Activated CD8-positive, alpha-beta memory T cell treated with anti-CD3 and anti-CD28 coated beads, Interleukin-2, amount 10 ng/mL, durations not matched to agents 7 days and 5 days (primary cell): ENCODE measurements at regions of chr7 and their contacts with region 1.

Region 1: GRCh38 chr7:117127585-117128168 is 174.4 kb downstream of the ST7 start:
- DNase-seq: peak; percentile 60
- ATAC-seq: peak; percentile 58
- H3K4me3 Mint-ChIP-seq: no peak overlapping the region
- H3K27ac Mint-ChIP-seq: no peak overlapping the region
- H3K4me1 Mint-ChIP-seq: peaks cover 12% of the 10 kb centered on the region
- H3K27me3 Mint-ChIP-seq: no peaks in the 10 kb centered on the region

Region 2: DNA sequence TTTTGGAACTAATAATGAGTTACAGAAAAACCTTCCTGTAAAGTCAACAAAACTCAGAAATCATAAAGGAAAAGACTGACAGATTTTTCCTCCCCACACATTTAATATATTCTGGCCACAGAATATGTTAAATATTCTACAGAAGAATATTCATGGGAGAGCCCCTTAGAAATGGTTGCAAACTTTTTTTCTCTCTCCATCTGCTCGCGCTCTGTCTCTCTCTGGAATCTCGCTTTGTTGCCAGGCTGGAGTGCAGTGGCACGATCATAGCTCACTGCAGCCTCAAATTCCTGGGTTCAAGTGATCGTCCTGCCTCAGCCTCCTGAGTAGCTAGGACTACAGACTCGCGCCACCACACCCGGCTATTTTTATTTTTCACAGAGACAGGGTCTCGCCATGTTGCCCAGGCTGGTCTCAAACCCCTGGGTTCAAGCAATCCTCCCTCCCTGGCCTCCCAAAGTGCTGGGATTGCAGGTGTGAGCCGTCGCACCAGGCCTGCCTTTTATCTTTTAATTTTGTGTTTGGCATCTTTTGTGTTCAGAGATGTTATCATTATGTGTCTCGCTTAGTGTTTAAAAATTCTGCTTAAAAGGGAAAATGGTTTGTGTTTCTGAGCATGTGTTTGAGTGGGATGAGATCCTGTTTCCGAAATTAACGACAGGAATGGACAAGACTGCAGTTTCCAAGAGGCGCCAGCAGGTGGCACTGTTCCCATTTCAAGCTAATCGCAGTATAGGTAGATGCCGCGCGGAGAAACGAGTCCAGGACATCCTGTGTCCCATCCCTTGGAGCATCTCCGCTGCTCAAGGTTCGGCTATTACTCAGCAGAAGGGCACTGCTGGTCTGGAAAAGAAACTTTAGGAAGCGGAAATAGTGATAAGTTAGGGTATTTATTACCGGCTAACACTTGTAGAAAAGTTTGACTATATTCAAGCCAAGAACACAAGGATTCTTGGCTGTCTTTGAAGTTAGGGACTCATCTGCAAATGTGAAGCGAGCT is 197.5 kb before region 1 on chr7:
- CTCF ChIA-PET with region 1: interaction called, 33 read pairs
- DNase-seq: peak; percentile 84
- ATAC-seq: peak; percentile 94
- H3K4me3 Mint-ChIP-seq: no peak overlapping the region
- H3K27ac Mint-ChIP-seq: no peak overlapping the region
- H3K4me1 Mint-ChIP-seq: peaks cover 6% of the 10 kb centered on the region
- H3K27me3 Mint-ChIP-seq: peaks cover 11% of the 10 kb centered on the region

Region 3: DNA sequence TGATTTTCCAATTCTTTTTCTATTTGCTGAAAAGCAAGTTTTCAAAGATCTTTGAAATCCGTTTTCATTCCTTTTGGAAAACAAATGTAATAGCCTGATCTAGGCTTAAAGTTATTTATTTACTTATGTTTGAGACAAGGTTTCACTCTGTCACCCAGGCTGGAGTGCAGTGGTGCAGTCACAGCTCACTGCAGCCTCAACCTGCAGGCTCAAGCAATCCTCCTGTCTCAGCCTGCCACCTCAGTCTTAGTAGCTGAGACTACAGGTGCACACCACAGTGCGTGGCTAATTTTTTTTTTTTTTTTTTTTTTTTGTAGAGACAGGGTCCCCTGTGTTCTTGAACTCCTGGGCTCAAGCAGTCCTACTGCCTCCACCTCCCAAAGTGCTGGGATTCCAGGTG is 169.8 kb before region 1 on chr7:
- CTCF ChIA-PET with region 1: interaction called, 10 read pairs
- DNase-seq: no peak
- ATAC-seq: no peak
- H3K4me3 Mint-ChIP-seq: no peak overlapping the region
- H3K27ac Mint-ChIP-seq: no peak overlapping the region
- H3K4me1 Mint-ChIP-seq: peaks cover 40% of the 10 kb centered on the region
- H3K27me3 Mint-ChIP-seq: no peaks in the 10 kb centered on the region

Region 4: GRCh38 chr7:116984917-116985316 is 142.8 kb before region 1 on chr7:
- CTCF ChIA-PET with region 1: interaction called, 47 read pairs
- DNase-seq: no peak
- ATAC-seq: peak; percentile 65
- H3K4me3 Mint-ChIP-seq: no peak overlapping the region
- H3K27ac Mint-ChIP-seq: no peak overlapping the region
- H3K4me1 Mint-ChIP-seq: no peaks in the 10 kb centered on the region
- H3K27me3 Mint-ChIP-seq: no peaks in the 10 kb centered on the region

Region 5: GRCh38 chr7:117012696-117013095 is 115.0 kb before region 1 on chr7:
- CTCF ChIA-PET with region 1: interaction called, 10 read pairs
- DNase-seq: no peak
- ATAC-seq: no peak
- H3K4me3 Mint-ChIP-seq: no peak overlapping the region
- H3K27ac Mint-ChIP-seq: no peak overlapping the region
- H3K4me1 Mint-ChIP-seq: peaks cover 51% of the 10 kb centered on the region
- H3K27me3 Mint-ChIP-seq: peaks cover 36% of the 10 kb centered on the region

Region 6: GRCh38 chr7:117169907-117170306 is 42.2 kb after region 1 on chr7:
- CTCF ChIA-PET with region 1: no interaction called
- DNase-seq: no peak
- ATAC-seq: no peak
- H3K4me3 Mint-ChIP-seq: no peak overlapping the region
- H3K27ac Mint-ChIP-seq: no peak overlapping the region
- H3K4me1 Mint-ChIP-seq: no peaks in the 10 kb centered on the region
- H3K27me3 Mint-ChIP-seq: no peaks in the 10 kb centered on the region